PC-3 (cell line): ENCODE measurements at regions of chr2 and their contacts with region 1.

Region 1: DNA sequence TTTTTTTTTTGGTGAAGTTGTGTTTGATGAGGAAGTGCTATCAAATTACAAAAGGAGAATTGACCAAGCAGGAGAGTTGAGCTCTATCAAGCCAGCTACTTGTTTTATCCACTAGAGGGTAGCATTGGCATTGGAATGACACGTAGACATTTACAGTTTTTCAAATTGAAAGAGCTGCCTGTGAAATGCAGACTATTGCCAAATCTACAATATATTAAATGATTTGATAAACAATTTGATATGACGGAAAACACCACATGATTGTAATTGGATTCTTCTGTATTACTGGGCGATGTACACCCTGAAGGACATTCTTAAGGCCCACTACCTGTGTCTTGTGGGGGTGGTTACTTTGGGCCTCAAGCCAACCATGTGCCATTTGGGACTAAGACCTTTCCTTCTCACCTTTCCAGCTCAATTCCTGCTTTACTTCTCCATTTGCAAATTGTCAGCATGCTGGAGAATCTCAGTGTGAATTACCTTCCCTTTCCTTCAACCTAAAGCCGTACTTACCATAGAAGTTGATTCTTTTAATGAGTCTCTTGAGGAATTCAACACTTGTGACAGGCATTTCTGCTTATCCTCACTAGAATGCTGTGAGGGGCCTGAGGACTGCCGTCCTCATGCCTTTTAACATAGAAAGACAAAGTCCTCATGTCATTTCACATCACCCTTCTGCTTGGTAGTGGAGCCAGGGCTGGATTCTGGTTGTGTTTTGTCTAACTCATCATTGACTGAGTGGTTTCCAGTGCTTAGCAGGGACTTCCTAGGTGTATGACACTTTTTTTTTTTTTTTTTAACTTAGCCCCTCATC is 134.8 kb upstream of the THUMPD2 start:
- DNase-seq: peak; percentile 88
- ATAC-seq: peak; percentile 74
- H3K4me3 ChIP-seq: no peak overlapping the region
- H3K27ac ChIP-seq: no peak overlapping the region
- H3K4me1 ChIP-seq: peaks cover 16% of the 10 kb centered on the region
- H3K27me3 ChIP-seq: no peaks in the 10 kb centered on the region
- CTCF ChIP-seq: peak; percentile 90

Region 2: DNA sequence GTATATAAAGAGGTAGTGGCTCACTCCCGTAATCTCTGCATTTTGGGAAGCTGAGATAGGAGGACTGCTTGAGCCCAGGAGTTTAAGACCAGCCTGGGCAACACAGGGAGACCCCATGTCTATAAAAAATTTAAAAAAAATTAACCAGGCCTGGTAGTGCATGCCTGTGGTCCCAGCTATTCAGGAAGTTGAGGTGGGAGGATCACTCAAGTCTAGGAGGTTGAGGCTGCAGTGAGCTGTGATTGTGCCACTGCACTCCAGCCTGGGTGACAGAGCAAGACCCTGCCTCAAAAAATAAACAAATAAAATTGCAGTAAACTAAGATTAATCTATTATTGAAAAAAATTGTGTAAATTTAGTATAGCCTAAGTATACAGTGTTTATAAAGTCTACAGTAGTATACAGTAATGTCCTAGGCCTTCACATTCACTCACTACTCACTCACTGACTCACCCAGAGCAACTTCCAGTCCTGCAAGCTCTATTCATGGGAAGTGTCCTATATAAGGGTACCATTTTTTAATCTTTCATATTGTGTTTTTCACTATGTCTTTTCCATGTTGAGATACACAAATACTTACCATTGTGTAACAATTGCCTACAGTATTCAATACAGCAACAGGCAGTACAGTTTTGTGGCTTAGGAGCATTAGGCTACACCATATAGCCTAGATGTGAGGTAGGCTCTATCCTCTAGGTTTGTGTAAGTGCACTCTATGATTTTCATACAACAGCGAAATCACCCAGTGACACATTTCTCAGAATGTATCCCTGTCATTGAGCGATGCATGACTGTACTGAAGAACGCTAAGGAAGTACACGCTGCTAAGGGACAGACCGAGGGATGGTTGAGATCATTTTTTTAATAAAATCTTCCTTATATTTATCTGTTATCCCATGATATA is 466.3 kb before region 1 on chr2:
- CTCF ChIA-PET with region 1: no interaction called
- POLR2A ChIA-PET with region 1: no interaction called
- intact Hi-C with region 1: no loop called
- DNase-seq: peak; percentile 61
- ATAC-seq: peak; percentile 83
- H3K4me3 ChIP-seq: peak overlapping the region; percentile 57
- H3K27ac ChIP-seq: peak overlapping the region; percentile 99
- H3K4me1 ChIP-seq: peaks cover 41% of the 10 kb centered on the region
- H3K27me3 ChIP-seq: no peaks in the 10 kb centered on the region
- CTCF ChIP-seq: no peak

Region 3: DNA sequence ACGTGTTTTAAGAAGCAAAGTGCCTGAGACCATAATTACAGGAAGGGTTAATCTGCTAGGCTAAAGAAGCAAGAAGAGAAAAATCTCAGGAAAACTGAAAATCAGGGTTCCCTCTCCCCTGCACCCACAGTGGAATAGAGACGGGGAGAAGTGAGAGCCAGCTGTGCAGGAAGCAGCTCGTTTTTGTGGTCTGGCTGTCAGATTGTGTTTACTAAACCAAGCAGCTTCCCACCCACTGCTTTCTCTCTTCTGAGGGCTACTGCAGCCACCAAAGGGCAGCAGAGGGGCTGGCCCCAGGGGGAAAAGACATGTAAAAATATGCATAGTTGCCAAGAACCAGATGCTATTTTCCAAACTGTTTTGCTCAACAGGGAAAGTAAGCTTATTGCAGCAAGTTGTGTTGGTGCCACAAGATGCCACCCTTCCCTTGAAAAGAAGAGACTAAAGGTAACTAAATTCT is 62.2 kb before region 1 on chr2:
- CTCF ChIA-PET with region 1: interaction called, 5 read pairs
- POLR2A ChIA-PET with region 1: no interaction called
- intact Hi-C with region 1: loop called (anchors 5 kb)
- DNase-seq: peak; percentile 28
- ATAC-seq: peak; percentile 41
- H3K4me3 ChIP-seq: no peak overlapping the region
- H3K27ac ChIP-seq: no peak overlapping the region
- H3K4me1 ChIP-seq: peaks cover 25% of the 10 kb centered on the region
- H3K27me3 ChIP-seq: no peaks in the 10 kb centered on the region
- CTCF ChIP-seq: 0 out of 2 replicates have a peak, but pooled peaks have one; percentile 23

Region 4: DNA sequence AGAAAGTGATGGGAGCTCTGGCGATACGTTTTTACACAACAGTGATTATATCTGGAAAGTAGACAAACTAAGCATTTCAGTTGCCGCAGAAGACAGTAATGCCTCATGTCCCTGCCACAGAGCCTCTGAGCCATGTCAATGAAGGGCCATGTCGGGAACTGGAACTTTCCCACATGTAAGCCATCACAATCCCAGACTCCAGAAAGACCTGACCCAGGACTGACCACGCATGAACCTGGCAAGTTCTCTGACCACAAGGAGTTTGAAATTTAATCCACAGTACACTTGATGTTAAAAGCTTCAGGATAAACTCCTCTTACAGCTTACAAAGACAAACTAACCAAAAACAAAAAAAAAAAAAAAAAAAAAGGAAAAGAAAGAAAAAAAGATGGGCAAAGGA is 270.7 kb after region 1 on chr2:
- CTCF ChIA-PET with region 1: interaction called, 17 read pairs
- POLR2A ChIA-PET with region 1: no interaction called
- intact Hi-C with region 1: no loop called
- DNase-seq: no peak
- ATAC-seq: no peak
- H3K4me3 ChIP-seq: no peak overlapping the region
- H3K27ac ChIP-seq: no peak overlapping the region
- H3K4me1 ChIP-seq: no peaks in the 10 kb centered on the region
- H3K27me3 ChIP-seq: no peaks in the 10 kb centered on the region
- CTCF ChIP-seq: no peak

Region 5: GRCh38 chr2:40244675-40245074 is 330.8 kb after region 1 on chr2:
- CTCF ChIA-PET with region 1: interaction called, 18 read pairs
- POLR2A ChIA-PET with region 1: no interaction called
- intact Hi-C with region 1: loop called (anchors 2 kb)
- DNase-seq: peak; percentile 77
- ATAC-seq: peak; percentile 94
- H3K4me3 ChIP-seq: no peak overlapping the region
- H3K27ac ChIP-seq: no peak overlapping the region
- H3K4me1 ChIP-seq: no peaks in the 10 kb centered on the region
- H3K27me3 ChIP-seq: no peaks in the 10 kb centered on the region
- CTCF ChIP-seq: peak; percentile 80

Region 6: DNA sequence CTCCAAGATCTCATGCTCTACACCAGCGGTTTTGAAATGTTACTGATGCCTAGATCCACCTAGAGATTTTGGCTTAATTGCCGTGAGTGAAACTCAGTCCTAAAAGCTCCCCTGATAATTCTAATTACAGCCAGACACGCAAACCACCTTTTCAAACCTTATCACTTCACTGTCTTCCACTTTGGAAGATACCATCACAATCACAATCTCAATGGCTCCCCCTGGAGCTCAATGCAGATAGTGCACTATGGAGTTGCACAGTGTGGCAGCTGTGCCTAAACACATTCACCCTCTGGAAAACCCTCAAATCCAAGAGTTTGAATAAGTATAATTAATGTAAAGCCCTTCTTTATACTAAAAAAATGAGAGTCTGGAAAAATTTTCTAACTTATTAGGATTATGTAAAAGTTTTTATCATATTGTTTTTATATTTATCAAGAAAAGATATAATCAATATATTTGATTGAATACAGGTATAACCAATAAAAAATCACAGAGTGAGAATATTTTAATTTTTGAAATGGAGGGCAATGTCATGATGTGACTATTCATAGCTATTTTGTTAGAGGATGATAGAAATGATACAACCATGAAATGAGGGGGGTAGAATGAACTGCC is 640.9 kb after region 1 on chr2:
- CTCF ChIA-PET with region 1: interaction called, 4 read pairs
- POLR2A ChIA-PET with region 1: no interaction called
- intact Hi-C with region 1: loop called (anchors 5 kb)
- DNase-seq: peak; percentile 81
- ATAC-seq: peak; percentile 59; the same call in 1 of the 2 replicates
- H3K4me3 ChIP-seq: no peak overlapping the region
- H3K27ac ChIP-seq: no peak overlapping the region
- H3K4me1 ChIP-seq: peaks cover 11% of the 10 kb centered on the region
- H3K27me3 ChIP-seq: no peaks in the 10 kb centered on the region
- CTCF ChIP-seq: peak; percentile 91

Region 7: DNA sequence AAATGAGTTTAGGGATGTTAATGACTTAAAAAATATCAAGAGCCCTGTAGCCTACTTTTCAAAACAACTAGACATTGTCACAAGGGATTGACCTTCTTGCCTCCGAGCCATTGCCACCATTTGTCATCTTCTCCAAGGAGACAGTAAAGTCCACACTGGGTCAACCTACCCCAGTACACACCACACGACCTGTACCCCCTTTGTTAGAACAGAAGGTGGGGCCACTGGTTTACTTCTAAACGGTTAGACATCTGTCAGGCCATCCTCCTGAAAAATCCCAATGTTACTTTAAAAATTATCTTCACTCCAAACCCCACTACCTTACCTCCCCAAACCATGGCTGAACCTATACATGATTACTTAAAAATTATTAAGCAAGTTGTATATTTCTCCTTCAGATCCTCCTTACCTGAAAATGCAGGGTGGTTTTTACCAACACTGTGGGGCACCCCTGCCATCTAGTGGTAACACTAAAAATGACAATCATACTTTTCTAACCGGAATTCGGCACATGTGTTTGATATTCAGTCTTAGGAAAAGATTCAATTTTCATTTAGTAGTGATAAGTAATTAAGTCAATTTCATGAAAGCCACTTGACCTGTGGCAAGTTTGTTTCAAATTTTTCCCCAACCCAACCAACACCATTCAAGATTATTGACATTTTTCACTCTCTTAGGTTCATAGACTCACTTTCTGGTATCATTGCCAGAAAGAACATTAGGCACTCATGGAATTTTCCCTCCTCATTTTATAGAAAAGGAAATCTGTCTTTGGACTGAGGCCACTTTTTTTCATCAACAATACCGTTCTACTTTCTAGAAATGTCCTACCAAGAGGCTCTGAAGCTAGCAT is 1868.7 kb after region 1 on chr2:
- CTCF ChIA-PET with region 1: no interaction called
- POLR2A ChIA-PET with region 1: no interaction called
- intact Hi-C with region 1: loop called (anchors 10 kb)
- DNase-seq: peak; percentile 69
- ATAC-seq: peak; percentile 33; the same call in 1 of the 2 replicates
- H3K4me3 ChIP-seq: no peak overlapping the region
- H3K27ac ChIP-seq: no peak overlapping the region
- H3K4me1 ChIP-seq: no peaks in the 10 kb centered on the region
- H3K27me3 ChIP-seq: peaks cover 30% of the 10 kb centered on the region; the same call in 1 of the 2 replicates
- CTCF ChIP-seq: peak; percentile 92